Astrocyte of the cerebellum (primary cell): ENCODE measurements at regions of chr4 and their contacts with region 1.

Region 1: DNA sequence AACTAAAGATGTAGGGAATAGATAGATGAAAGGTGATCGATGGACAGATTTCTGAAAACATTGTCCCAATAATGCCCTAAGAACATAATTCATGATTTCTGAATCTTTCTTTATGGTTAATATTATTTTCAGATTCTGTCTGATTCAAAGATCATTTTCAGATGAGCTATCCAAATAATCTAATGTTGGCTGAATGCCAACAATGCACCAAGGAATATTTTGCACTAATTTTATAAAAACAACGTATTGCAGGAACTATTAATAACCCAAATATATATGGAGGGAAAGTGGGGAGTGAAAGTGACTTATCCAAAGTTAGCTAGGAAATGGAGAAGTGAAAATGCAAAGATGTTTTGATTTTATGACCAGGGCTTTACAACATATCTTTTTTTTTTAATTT is 1675.5 kb downstream of the STIM2 start:
- DNase-seq: no peak
- H3K4me3 ChIP-seq: no peak overlapping the region
- CTCF ChIP-seq: no peak

Region 2: DNA sequence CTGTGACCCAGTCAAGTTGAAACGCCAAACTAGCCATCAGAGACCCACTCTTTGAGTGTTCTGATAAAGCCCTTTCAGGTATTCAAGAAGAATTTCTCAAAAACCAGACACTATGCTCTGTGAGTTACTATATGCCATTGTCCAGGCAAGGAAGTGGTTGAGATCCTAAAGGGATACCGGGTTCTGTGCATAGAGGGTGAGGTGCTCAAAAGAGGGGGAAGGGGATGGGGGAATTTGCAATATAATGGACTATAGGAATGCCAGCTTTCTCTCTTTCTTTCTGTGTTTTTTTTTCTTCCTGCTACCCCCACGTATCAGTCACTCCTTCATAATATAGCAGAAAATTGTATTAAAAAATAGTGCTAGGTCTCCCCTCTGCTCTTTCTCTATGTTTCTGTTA is 56.5 kb before region 1 on chr4:
- in situ Hi-C with region 1: loop called (anchors 5 kb)
- DNase-seq: no peak
- H3K4me3 ChIP-seq: no peak overlapping the region
- CTCF ChIP-seq: no peak

Region 3: GRCh38 chr4:28490669-28491068 is 45.5 kb before region 1 on chr4:
- in situ Hi-C with region 1: no loop called
- DNase-seq: no peak
- H3K4me3 ChIP-seq: no peak overlapping the region
- CTCF ChIP-seq: no peak